ENCODE measurements at regions of chr17 and their contacts with region 1.

Region 1: DNA sequence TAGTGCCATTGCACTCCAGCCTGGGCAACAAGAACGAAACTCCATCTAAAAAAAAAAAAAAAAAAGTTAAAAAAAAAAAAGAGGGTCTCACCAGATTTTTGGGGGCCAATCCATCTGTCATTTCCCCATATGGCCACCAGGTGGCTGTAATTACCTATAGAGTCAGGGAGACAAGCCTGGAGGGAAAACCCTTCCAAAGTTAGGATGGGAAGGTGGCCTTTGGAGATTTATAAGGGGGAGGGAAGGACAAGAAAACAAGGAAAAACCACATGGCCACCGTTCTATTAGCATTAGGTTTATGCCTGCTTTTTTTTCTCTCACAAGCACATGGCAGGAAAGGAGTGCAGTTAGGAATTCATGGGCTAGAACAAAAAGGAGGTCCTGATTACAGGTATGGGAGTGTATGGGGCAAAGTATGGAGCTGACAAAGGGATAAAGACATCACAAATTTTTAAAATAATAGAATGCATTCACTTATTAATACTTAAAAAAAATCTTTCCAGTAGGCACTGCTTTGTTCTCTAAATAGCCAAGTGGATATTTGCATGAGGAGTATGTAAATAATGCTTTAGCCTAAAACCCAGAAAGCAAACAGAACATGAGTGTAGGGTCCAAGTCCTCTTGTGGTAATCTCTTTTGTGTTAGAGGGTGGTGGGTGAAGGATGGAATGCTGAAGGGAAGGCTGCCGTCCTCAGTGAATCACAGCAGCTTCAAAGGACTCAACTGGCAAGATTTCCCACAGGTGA is 5.1 kb downstream of the CYB5D1 start:
- DNase-seq: peak in 7 of 9 experiments; percentile 19 to 78 (median 66)
- ATAC-seq: no peak
- H3K4me3 ChIP-seq: no peak overlapping the region
- H3K4me3 Mint-ChIP-seq: no peak overlapping the region
- H3K27ac ChIP-seq: no peak overlapping the region
- H3K27ac Mint-ChIP-seq: no peak overlapping the region
- H3K4me1 ChIP-seq: peaks cover 20% of the 10 kb centered on the region
- H3K4me1 Mint-ChIP-seq: peaks cover 17% of the 10 kb centered on the region
- H3K27me3 ChIP-seq: no peaks in the 10 kb centered on the region
- H3K27me3 Mint-ChIP-seq: no peaks in the 10 kb centered on the region
- CTCF ChIP-seq: peak; percentile 75

Region 2: DNA sequence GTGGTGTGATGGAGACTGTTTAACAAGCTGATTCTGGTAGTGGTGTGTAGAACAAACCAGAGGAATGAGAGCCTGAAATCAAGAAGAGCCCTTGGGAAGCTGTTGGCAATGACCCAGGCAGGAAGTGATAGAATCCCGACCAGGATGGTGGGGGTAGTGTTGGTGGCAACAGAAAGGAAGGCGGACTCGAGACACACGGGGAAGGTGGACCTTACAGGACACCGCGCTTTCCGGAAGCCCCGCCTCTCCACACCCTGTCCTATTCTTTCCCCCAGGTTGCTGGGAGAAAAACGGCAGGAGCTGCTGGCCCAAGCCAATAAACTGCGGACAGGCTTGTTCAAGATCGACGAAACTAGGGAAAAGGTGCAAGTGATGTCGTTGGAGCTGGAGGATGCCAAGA is 58.9 kb before region 1 on chr17:
- CTCF ChIA-PET with region 1: no interaction called
- POLR2A ChIA-PET with region 1: no interaction called
- intact Hi-C with region 1: no loop called
- DNase-seq: no peak
- ATAC-seq: no peak
- H3K4me3 ChIP-seq: no peak overlapping the region
- H3K4me3 Mint-ChIP-seq: no peak overlapping the region
- H3K27ac ChIP-seq: no peak overlapping the region
- H3K27ac Mint-ChIP-seq: no peak overlapping the region
- H3K4me1 ChIP-seq: no peaks in the 10 kb centered on the region
- H3K4me1 Mint-ChIP-seq: no peaks in the 10 kb centered on the region
- H3K27me3 ChIP-seq: peaks cover 0 to 3% of the 10 kb centered on the region in 2 experiments
- H3K27me3 Mint-ChIP-seq: peaks cover 17% of the 10 kb centered on the region
- CTCF ChIP-seq: no peak

Region 3: GRCh38 chr17:7873051-7873450 is 10.2 kb after region 1 on chr17:
- CTCF ChIA-PET with region 1: interaction called, 17 read pairs
- POLR2A ChIA-PET with region 1: interaction called, 10 read pairs
- intact Hi-C with region 1: no loop called
- DNase-seq: no peak
- ATAC-seq: no peak
- H3K4me3 ChIP-seq: no peak overlapping the region
- H3K4me3 Mint-ChIP-seq: no peak overlapping the region
- H3K27ac ChIP-seq: no peak overlapping the region
- H3K27ac Mint-ChIP-seq: no peak overlapping the region
- H3K4me1 ChIP-seq: peaks cover 18% of the 10 kb centered on the region
- H3K4me1 Mint-ChIP-seq: peaks cover 32% of the 10 kb centered on the region
- H3K27me3 ChIP-seq: no peaks in the 10 kb centered on the region
- H3K27me3 Mint-ChIP-seq: no peaks in the 10 kb centered on the region
- CTCF ChIP-seq: no peak

Region 4: GRCh38 chr17:7887482-7888183 is 24.8 kb after region 1 on chr17:
- CTCF ChIA-PET with region 1: interaction called, 9 read pairs
- POLR2A ChIA-PET with region 1: interaction called, 3 read pairs
- intact Hi-C with region 1: loop called in 1 of 2 experiments (anchors 1 kb)
- DNase-seq: peak; percentile 73 to 97 (median 87)
- ATAC-seq: peak; percentile 71
- H3K4me3 ChIP-seq: peak overlapping the region; percentile 86 to 89
- H3K4me3 Mint-ChIP-seq: no peak overlapping the region
- H3K27ac ChIP-seq: peak overlapping the region; percentile 61 to 80
- H3K27ac Mint-ChIP-seq: no peak overlapping the region
- H3K4me1 ChIP-seq: peaks cover 30% of the 10 kb centered on the region
- H3K4me1 Mint-ChIP-seq: peaks cover 13% of the 10 kb centered on the region
- H3K27me3 ChIP-seq: no peaks in the 10 kb centered on the region
- H3K27me3 Mint-ChIP-seq: no peaks in the 10 kb centered on the region
- CTCF ChIP-seq: no peak

Region 5: GRCh38 chr17:7897773-7898172 is 34.9 kb after region 1 on chr17:
- CTCF ChIA-PET with region 1: interaction called, 57 read pairs
- POLR2A ChIA-PET with region 1: interaction called, 3 read pairs
- intact Hi-C with region 1: loop called in 1 of 2 experiments (anchors 1 kb)
- DNase-seq: peak in 3 of 9 experiments; percentile 39 to 61 (median 44)
- ATAC-seq: peak; percentile 81
- H3K4me3 ChIP-seq: no peak overlapping the region
- H3K4me3 Mint-ChIP-seq: no peak overlapping the region
- H3K27ac ChIP-seq: no peak overlapping the region
- H3K27ac Mint-ChIP-seq: peak overlapping the region; percentile 75
- H3K4me1 ChIP-seq: no peaks in the 10 kb centered on the region
- H3K4me1 Mint-ChIP-seq: peaks cover 9% of the 10 kb centered on the region
- H3K27me3 ChIP-seq: no peaks in the 10 kb centered on the region
- H3K27me3 Mint-ChIP-seq: no peaks in the 10 kb centered on the region
- CTCF ChIP-seq: peak; percentile 36

Region 6: GRCh38 chr17:8345052-8345682 is 482.3 kb after region 1 on chr17:
- CTCF ChIA-PET with region 1: no interaction called
- POLR2A ChIA-PET with region 1: no interaction called
- intact Hi-C with region 1: no loop called
- DNase-seq: no peak
- ATAC-seq: no peak
- H3K4me3 ChIP-seq: no peak overlapping the region
- H3K4me3 Mint-ChIP-seq: no peak overlapping the region
- H3K27ac ChIP-seq: no peak overlapping the region
- H3K27ac Mint-ChIP-seq: no peak overlapping the region
- H3K4me1 ChIP-seq: no peaks in the 10 kb centered on the region
- H3K4me1 Mint-ChIP-seq: no peaks in the 10 kb centered on the region
- H3K27me3 ChIP-seq: peaks cover 0 to 3% of the 10 kb centered on the region in 2 experiments
- H3K27me3 Mint-ChIP-seq: peaks cover 21% of the 10 kb centered on the region
- CTCF ChIP-seq: no peak